ENCODE measurements at regions of chr12 and their contacts with region 1.

Region 1: DNA sequence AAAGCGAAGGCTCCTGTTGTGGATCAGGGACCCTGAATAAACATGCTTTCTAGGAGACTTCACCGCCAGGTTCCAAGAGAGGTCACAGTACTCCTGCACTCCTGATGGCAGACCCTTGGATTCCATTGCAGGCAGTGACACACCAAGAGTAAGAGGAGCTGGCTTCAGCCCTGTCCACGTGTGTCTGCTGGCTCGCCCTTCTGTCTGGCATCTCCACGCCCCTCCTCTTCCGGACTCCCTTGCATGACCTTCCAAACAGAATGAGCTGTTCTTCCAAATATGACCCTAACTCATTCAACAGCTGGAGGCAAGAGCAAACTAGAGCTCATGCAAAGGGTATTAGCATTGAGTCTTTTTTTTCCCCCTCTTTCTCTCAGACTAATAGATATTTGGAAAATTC is 233.0 kb upstream of the PLEKHG7 start:
- DNase-seq: no peak
- H3K4me3 Mint-ChIP-seq: no peak overlapping the region
- H3K27ac Mint-ChIP-seq: peak overlapping the region; percentile 89
- H3K4me1 Mint-ChIP-seq: peaks cover 49% of the 10 kb centered on the region
- H3K27me3 Mint-ChIP-seq: no peaks in the 10 kb centered on the region

Region 2: DNA sequence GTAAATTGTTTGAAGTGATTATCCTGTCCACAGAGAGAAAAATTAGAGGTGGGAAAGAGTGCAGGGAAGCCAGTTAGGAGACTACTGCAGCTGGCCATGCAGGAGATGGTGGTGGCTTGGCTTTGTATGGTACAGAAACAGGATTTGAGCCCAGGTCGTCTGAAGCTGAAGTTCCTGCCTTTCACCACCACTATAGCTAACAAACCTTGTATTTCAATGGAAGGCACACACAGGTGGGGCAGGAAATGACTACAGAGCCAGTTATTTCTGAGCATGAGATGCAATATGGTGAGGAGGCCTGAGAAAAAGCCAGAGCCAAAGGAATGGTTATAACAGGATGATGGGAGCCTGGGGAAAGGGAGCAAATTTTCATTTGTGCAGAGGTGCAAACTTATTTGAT is 428.1 kb before region 1 on chr12:
- CTCF ChIA-PET with region 1: no interaction called
- intact Hi-C with region 1: loop called (anchors 5 kb)
- DNase-seq: peak; percentile 41
- H3K4me3 Mint-ChIP-seq: no peak overlapping the region
- H3K27ac Mint-ChIP-seq: peak overlapping the region; percentile 61
- H3K4me1 Mint-ChIP-seq: peaks cover 87% of the 10 kb centered on the region
- H3K27me3 Mint-ChIP-seq: no peaks in the 10 kb centered on the region

Region 3: DNA sequence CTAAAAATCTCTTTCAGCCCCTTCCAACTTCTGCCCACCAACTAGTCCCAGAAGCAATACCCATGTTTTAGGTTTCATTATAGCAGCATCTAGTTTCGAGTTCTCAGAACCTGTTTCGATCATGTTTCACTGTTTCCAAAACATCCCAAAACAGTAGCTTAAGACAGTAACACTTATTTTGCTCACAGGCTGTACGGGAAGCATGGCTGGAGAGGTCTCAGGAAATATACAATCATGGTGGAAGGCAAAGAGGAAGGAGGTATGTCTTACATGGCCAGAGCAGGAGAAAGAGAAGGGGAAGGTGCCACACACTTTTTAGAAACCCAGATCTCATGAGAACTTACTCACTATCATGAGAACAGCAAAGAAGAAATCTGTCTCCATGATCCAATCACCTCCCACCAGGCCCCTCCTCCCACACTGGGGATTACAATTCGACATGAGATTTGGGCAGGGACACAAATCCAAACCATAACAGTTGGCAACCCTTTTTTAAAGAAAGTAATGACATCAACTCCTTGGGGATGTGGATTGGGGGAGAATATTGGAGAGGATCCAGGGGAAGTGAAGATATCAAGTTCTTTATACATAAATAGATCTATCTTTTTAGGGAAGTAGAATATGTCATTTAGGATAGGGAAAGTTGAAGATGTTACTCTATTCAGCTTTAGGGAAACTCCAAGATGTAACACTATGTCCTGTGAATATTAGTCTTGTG is 37.0 kb before region 1 on chr12:
- CTCF ChIA-PET with region 1: no interaction called
- intact Hi-C with region 1: loop called (anchors 2 kb)
- DNase-seq: no peak
- H3K4me3 Mint-ChIP-seq: no peak overlapping the region
- H3K27ac Mint-ChIP-seq: peak overlapping the region; percentile 76
- H3K4me1 Mint-ChIP-seq: peaks cover 48% of the 10 kb centered on the region
- H3K27me3 Mint-ChIP-seq: no peaks in the 10 kb centered on the region

Region 4: DNA sequence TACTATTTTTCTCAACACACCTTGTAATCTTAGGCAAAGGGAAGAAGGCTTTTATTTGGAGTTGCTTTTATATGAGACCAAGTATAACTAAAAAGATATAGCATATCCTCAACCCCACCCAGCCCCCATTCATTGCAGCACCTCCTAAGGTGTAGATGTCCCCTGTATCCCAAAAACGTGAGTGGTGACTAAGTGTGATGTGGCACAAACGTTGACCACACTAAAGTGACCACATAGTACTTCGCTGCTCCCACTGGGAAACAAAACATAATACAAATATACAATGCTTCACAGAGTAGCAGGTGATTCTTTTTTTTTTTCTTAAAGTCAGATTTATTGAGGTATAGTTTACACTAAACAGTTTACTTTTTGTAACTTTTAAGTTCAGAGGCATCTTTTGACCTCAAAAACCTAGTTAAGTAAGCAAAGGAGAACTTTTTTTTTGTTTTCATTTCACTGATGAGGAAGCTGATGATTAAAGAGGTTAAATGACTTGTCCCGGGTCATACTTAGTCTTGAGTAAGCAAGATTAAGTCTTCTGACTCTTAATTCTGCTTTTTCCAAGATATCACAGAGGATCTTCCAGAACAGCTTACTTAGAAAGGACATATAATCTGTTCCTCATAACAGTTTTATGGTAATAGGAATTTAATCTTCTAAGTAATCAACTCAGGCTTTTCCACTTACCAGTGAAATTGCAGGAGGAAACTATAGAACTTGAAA is 12.2 kb before region 1 on chr12:
- CTCF ChIA-PET with region 1: no interaction called
- intact Hi-C with region 1: no loop called
- DNase-seq: no peak
- H3K4me3 Mint-ChIP-seq: no peak overlapping the region
- H3K27ac Mint-ChIP-seq: no peak overlapping the region
- H3K4me1 Mint-ChIP-seq: peaks cover 30% of the 10 kb centered on the region
- H3K27me3 Mint-ChIP-seq: no peaks in the 10 kb centered on the region

Region 5: DNA sequence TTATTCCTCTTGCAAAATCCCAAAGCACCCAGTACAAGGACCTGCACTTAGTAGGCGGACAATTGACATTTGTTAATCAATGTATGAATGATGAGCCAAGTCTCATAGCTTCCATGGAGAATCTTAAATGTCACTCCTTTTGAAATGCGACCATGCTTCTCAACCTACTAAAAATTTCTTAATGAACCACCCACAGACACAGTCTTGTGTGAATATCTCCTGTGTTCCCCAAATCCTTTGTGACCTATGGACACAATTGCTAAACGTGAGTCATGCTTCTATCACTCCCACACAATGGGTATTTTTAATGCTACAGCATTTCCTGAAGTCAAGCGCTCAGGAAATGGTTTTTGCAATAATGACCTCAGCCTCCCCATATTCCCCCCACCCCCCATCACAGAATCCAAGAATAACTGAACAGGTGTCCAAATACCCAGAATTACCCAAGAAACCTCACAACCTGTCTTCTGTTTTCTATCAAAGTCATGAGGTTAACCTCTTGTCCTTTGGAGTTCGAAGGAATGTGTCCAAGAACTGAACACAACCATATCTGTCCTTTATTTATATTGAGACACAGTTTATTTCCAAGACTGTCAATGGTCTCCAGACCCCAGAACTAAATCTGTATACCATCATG is 69.4 kb after region 1 on chr12:
- CTCF ChIA-PET with region 1: interaction called, 4 read pairs
- intact Hi-C with region 1: loop called (anchors 1 kb)
- DNase-seq: peak; percentile 65
- H3K4me3 Mint-ChIP-seq: no peak overlapping the region
- H3K27ac Mint-ChIP-seq: peak overlapping the region; percentile 97
- H3K4me1 Mint-ChIP-seq: peaks cover 56% of the 10 kb centered on the region
- H3K27me3 Mint-ChIP-seq: no peaks in the 10 kb centered on the region

Region 6: DNA sequence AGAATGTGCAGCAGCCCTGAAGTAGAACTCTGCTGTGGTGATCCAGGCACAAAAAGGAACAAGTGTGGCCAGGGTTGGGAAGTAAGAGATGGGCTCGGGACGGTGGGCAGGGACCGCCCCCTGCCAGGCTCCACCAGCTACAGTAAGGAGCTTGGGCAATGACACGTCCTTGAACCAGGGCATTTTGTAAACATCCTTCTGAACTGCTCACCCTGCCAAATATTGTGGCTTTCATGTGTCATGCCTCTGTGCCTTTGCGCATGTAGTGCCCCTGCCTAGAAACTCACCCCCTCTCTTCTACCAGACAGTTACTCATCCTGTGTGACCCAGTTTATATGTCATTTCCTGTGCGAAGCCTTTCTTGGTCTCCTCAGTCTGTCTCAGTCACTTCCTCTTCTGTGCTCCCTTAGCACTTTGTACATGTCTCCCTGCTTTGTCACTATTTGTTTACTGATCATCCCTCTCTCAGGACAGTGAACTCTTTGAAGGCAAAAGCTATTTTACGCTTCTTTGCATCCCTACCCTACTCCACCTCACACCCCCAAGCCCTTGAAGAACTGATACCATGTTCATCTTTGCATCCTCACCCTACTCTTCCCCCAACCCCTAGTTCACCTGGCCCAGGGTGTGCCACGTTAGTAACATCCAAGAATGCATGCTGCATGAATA is 124.0 kb after region 1 on chr12:
- CTCF ChIA-PET with region 1: no interaction called
- intact Hi-C with region 1: loop called (anchors 1 kb)
- DNase-seq: peak; percentile 87
- H3K4me3 Mint-ChIP-seq: peak overlapping the region; percentile 55
- H3K27ac Mint-ChIP-seq: peak overlapping the region; percentile 96
- H3K4me1 Mint-ChIP-seq: peaks cover 78% of the 10 kb centered on the region
- H3K27me3 Mint-ChIP-seq: no peaks in the 10 kb centered on the region

Region 7: DNA sequence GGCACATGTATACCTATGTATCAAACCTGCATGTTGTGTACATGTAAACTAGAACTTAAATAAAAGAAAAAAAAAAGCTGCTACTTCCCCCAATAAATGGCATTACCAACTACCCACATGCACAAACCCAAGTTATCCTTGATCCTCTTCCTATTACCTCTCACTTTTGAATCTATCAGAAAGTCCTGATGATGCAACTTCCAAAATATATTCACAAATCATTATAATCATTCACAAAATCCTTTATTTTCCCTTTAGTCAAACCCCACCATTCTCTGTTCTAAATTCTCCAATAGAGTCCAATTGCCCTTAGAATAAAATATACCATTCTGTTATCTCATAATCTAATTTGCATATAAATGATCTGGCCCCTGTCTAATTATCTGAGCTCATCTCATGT is 325.0 kb after region 1 on chr12:
- CTCF ChIA-PET with region 1: no interaction called
- intact Hi-C with region 1: no loop called
- DNase-seq: no peak
- H3K4me3 Mint-ChIP-seq: no peak overlapping the region
- H3K27ac Mint-ChIP-seq: no peak overlapping the region
- H3K4me1 Mint-ChIP-seq: peaks cover 7% of the 10 kb centered on the region
- H3K27me3 Mint-ChIP-seq: no peaks in the 10 kb centered on the region

Region 8: GRCh38 chr12:92810370-92810769 is 340.5 kb after region 1 on chr12:
- CTCF ChIA-PET with region 1: no interaction called
- intact Hi-C with region 1: no loop called
- DNase-seq: no peak
- H3K4me3 Mint-ChIP-seq: no peak overlapping the region
- H3K27ac Mint-ChIP-seq: no peak overlapping the region
- H3K4me1 Mint-ChIP-seq: no peaks in the 10 kb centered on the region
- H3K27me3 Mint-ChIP-seq: no peaks in the 10 kb centered on the region

Measured in activated naive CD4-positive, alpha-beta T cell treated with anti-CD3 and anti-CD28 coated beads for 36 hours (primary cell).